ENCODE measurements at regions of chr1 and their contacts with region 1.

Region 1: GRCh38 chr1:92994105-92994712 is 32.9 kb upstream of the DIPK1A start:
- DNase-seq: peak; percentile 79
- ATAC-seq: peak; percentile 83
- H3K4me3 Mint-ChIP-seq: no peak overlapping the region
- H3K27ac Mint-ChIP-seq: no peak overlapping the region
- H3K4me1 Mint-ChIP-seq: peaks cover 35% of the 10 kb centered on the region
- H3K27me3 Mint-ChIP-seq: no peaks in the 10 kb centered on the region

Region 2: GRCh38 chr1:92663775-92664174 is 330.4 kb before region 1 on chr1:
- CTCF ChIA-PET with region 1: no interaction called
- POLR2A ChIA-PET with region 1: no interaction called
- intact Hi-C with region 1: no loop called
- DNase-seq: no peak
- ATAC-seq: no peak
- H3K4me3 Mint-ChIP-seq: no peak overlapping the region
- H3K27ac Mint-ChIP-seq: no peak overlapping the region
- H3K4me1 Mint-ChIP-seq: no peaks in the 10 kb centered on the region
- H3K27me3 Mint-ChIP-seq: no peaks in the 10 kb centered on the region

Region 3: GRCh38 chr1:92858564-92859399 is 135.4 kb before region 1 on chr1:
- CTCF ChIA-PET with region 1: interaction called, 167 read pairs
- POLR2A ChIA-PET with region 1: no interaction called
- intact Hi-C with region 1: loop called (anchors 1 kb)
- DNase-seq: peak; percentile 58
- ATAC-seq: peak; percentile 86
- H3K4me3 Mint-ChIP-seq: peak overlapping the region; percentile 48
- H3K27ac Mint-ChIP-seq: peak overlapping the region; percentile 48
- H3K4me1 Mint-ChIP-seq: peaks cover 17% of the 10 kb centered on the region
- H3K27me3 Mint-ChIP-seq: no peaks in the 10 kb centered on the region

Region 4: DNA sequence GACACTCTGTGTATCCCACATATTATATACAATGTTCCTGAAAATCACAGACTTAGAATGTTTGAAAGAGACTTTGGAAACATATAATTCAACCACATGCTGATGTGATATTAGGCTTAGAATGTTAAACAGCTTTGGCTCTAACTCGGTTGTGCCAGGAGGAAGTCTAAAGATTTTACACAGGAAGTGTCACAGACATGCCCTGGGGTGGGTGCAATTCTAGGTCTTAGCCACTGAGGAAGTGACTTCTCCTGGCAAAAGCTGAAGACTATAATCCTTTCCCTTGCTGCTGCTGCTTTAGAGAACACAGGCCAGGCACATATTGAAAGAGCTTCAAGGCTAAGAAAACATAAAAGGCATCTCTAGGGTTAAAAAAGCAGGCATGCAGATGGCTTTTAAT is 111.4 kb before region 1 on chr1:
- CTCF ChIA-PET with region 1: interaction called, 15 read pairs
- POLR2A ChIA-PET with region 1: no interaction called
- intact Hi-C with region 1: no loop called
- DNase-seq: peak; percentile 41
- ATAC-seq: peak; percentile 86
- H3K4me3 Mint-ChIP-seq: no peak overlapping the region
- H3K27ac Mint-ChIP-seq: peak overlapping the region; percentile 62
- H3K4me1 Mint-ChIP-seq: peaks cover 40% of the 10 kb centered on the region
- H3K27me3 Mint-ChIP-seq: no peaks in the 10 kb centered on the region

Region 5: GRCh38 chr1:92960395-92961130 is 33.6 kb before region 1 on chr1:
- CTCF ChIA-PET with region 1: interaction called, 130 read pairs
- POLR2A ChIA-PET with region 1: interaction called, 8 read pairs
- intact Hi-C with region 1: loop called (anchors 1 kb)
- DNase-seq: peak; percentile 78
- ATAC-seq: peak; percentile 62
- H3K4me3 Mint-ChIP-seq: peak overlapping the region; percentile 94
- H3K27ac Mint-ChIP-seq: peak overlapping the region; percentile 95
- H3K4me1 Mint-ChIP-seq: peaks cover 36% of the 10 kb centered on the region
- H3K27me3 Mint-ChIP-seq: no peaks in the 10 kb centered on the region

Region 6: DNA sequence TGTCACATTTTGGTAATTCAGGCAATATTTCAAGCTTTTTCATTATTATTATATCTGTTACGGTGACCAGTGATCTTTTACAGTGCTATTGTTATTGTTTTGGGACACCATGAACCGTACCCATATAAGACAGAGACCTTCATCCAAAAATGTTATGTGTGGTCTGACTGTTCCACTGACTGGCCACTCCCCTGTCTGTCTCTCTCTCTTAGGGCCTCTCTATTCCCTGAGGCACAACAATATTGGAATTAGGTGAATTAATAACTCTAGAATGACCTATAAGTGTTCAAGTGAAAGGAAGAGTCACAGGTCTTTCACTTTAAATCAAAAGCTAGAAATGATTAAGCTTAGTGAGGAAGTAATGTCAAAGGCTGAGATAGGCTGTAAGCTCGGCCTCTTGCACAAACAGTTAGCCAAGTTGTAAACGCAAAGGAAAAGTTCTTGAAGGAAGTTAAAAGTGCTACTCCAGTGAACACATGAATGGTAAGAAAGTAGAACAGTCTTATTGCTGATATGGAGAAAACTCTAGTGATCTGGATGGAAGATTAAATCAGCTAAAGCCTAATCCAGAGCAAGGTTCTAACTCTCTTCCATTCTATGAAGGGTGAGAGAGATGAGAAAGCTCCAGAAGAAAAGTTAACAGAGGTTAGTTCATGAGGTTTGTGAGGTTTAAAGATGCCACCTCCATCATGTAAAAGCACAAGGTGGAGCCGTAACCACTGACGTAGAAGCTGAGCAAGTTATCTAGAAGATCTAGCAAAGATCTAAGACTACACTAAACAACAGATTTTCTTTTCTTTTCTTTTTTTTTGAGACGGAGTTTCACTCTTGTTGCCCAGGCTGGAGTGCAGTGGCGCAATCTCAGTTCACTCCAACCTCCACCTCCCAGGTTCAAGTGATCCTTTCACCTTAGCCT is 13.2 kb before region 1 on chr1:
- CTCF ChIA-PET with region 1: interaction called, 23 read pairs
- POLR2A ChIA-PET with region 1: interaction called, 4 read pairs
- intact Hi-C with region 1: loop called in 1 of 2 experiments (anchors 1 kb)
- DNase-seq: peak; percentile 46
- ATAC-seq: peak; percentile 73
- H3K4me3 Mint-ChIP-seq: peak overlapping the region; percentile 47
- H3K27ac Mint-ChIP-seq: peak overlapping the region; percentile 97
- H3K4me1 Mint-ChIP-seq: peaks cover 54% of the 10 kb centered on the region
- H3K27me3 Mint-ChIP-seq: no peaks in the 10 kb centered on the region

Region 7: GRCh38 chr1:93148001-93148400 is 153.8 kb after region 1 on chr1:
- CTCF ChIA-PET with region 1: no interaction called
- POLR2A ChIA-PET with region 1: no interaction called
- intact Hi-C with region 1: no loop called
- DNase-seq: no peak
- ATAC-seq: no peak
- H3K4me3 Mint-ChIP-seq: no peak overlapping the region
- H3K27ac Mint-ChIP-seq: no peak overlapping the region
- H3K4me1 Mint-ChIP-seq: peaks cover 9% of the 10 kb centered on the region
- H3K27me3 Mint-ChIP-seq: no peaks in the 10 kb centered on the region

Measured in activated CD4-positive, alpha-beta T cell treated with anti-CD3 and anti-CD28 coated beads for 36 hours (primary cell).